ENCODE measurements at regions of chr15 and their contacts with region 1.

Region 1: GRCh38 chr15:48717458-48717857 is 71.9 kb upstream of the FBN1 start:
- DNase-seq: no peak
- ATAC-seq: no peak
- H3K4me3 Mint-ChIP-seq: no peak overlapping the region
- H3K27ac Mint-ChIP-seq: no peak overlapping the region
- H3K4me1 Mint-ChIP-seq: peaks cover 5% of the 10 kb centered on the region
- H3K27me3 Mint-ChIP-seq: no peaks in the 10 kb centered on the region

Region 2: GRCh38 chr15:48657950-48658591 is 59.4 kb before region 1 on chr15:
- CTCF ChIA-PET with region 1: no interaction called
- POLR2A ChIA-PET with region 1: no interaction called
- intact Hi-C with region 1: loop called in 1 of 2 experiments (anchors 5 kb)
- DNase-seq: no peak
- ATAC-seq: no peak
- H3K4me3 Mint-ChIP-seq: no peak overlapping the region
- H3K27ac Mint-ChIP-seq: no peak overlapping the region
- H3K4me1 Mint-ChIP-seq: no peaks in the 10 kb centered on the region
- H3K27me3 Mint-ChIP-seq: peaks cover 5% of the 10 kb centered on the region

Region 3: GRCh38 chr15:48674876-48675275 is 42.6 kb before region 1 on chr15:
- CTCF ChIA-PET with region 1: no interaction called
- POLR2A ChIA-PET with region 1: no interaction called
- intact Hi-C with region 1: loop called in 1 of 2 experiments (anchors 5 kb)
- DNase-seq: no peak
- ATAC-seq: no peak
- H3K4me3 Mint-ChIP-seq: no peak overlapping the region
- H3K27ac Mint-ChIP-seq: no peak overlapping the region
- H3K4me1 Mint-ChIP-seq: no peaks in the 10 kb centered on the region
- H3K27me3 Mint-ChIP-seq: peaks cover 5% of the 10 kb centered on the region